Pancreas (tissue), 10 donors: ENCODE measurements at regions of chr22 and their contacts with region 1.

Region 1: GRCh38 chr22:42437488-42438292 is 5.5 kb upstream of the NFAM1 start:
- DNase-seq: peak; percentile 62 to 90 (median 81)
- ATAC-seq: peak; percentile 89 to 92 (median 91)
- H3K4me3 ChIP-seq: peak overlapping the region in 3 of 4 donors; percentile 12 to 39 (median 26)
- H3K27ac ChIP-seq: peak overlapping the region; percentile 0 to 78 (median 57)
- H3K4me1 ChIP-seq: no peaks in the 10 kb centered on the region
- H3K27me3 ChIP-seq: no peaks in the 10 kb centered on the region
- CTCF ChIP-seq: peak; percentile 88 to 95 (median 90)

Region 2: DNA sequence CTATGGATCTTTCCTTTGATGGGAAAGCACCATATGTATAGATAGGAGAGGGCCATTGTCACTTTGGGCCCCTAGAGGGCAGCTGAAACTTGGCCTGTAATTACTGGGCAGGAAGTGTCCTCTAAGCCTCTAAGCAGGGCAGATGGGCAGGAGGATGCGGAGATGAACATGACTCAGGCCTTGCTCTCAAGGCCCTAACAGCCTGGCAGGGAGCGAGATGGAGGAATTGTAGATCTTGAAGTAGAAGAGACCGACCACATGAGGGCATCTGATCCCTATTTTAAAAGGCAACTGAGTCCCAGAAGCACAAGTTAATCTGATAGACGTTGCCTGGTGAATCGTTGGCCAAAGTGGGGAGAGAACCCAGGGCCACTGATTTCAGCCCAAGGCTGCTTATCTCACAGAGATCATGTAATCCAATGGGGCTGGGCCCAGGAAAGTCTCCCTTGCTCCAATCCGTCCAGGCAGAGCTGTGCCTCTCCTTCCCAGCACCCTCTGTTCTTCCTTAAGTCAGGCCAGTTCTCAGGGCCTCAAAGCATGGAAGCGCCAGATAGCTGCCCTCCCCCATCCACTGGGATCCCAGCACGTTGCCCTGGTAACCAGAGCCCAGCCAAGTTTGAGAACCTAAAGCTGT is 471.0 kb before region 1 on chr22:
- intact Hi-C with region 1: loop called in 1 of 3 experiments (anchors 10 kb)
- DNase-seq: no peak
- ATAC-seq: peak in 3 of 4 donors; percentile 70 to 84 (median 75)
- H3K4me3 ChIP-seq: no peak overlapping the region
- H3K27ac ChIP-seq: no peak overlapping the region
- H3K4me1 ChIP-seq: no peaks in the 10 kb centered on the region
- H3K27me3 ChIP-seq: no peaks in the 10 kb centered on the region
- CTCF ChIP-seq: peak in 1 of 4 donors; percentile 15

Region 3: DNA sequence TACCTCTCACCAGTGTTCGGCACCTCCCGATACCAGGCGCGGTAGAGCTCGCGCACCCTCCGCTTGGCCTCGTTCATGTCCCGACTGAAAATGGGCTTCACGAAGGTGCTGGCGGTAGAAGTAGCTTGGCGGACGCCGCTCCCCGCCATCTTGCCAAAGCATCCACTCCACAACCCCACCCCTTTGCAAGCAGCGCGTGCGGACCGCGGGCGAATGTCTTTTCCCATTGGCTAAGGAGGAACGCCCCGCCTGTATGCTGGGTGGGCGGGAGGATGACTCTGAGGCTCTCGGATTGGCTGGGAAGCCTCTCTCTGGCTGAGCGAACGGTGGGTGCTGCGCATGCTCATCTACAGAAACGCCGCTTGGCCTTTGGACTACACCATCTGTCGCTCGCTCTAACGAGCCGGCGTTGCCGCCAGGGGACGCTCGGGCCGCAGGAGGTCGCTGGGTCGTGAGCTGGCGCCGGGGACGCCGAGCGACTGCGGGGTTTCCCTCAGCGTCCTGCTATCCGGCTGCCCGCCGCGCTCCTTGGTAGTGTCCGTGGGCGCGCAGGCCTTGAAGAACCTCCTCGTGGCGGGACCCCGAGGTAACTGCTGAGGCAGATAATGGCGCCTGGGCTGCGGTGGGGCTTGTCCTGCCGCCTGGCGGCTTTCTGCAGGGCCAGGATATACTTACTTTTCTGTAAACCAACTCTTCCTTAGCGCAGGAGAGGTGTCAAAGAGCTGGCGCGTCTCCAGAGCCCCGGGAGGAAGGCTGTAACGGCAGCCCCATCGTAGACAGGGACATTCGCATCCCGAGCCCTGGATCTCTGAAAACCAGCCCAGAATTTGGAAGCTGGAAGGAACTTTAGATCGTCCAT is 346.9 kb before region 1 on chr22 and contains the start of gene NDUFA6:
- intact Hi-C with region 1: loop called in 1 of 3 experiments (anchors 10 kb)
- DNase-seq: peak; percentile 97 to 99 (median 99)
- ATAC-seq: peak; percentile 92 to 97 (median 94)
- H3K4me3 ChIP-seq: peak within 1 kb of the TSS; percentile 62 to 89 (median 74)
- H3K27ac ChIP-seq: peak within 1 kb of the TSS; percentile 92 to 98 (median 94)
- H3K4me1 ChIP-seq: peaks cover 0 to 15% (median 5%) of the 10 kb centered on the region in 3 donors
- H3K27me3 ChIP-seq: no peaks in the 10 kb centered on the region
- CTCF ChIP-seq: peak; percentile 68 to 90 (median 82)
- total RNA-seq, gene NDUFA6: 16.8 to 32.4 (median 23.0) TPM

Region 4: GRCh38 chr22:42169055-42169469 is 268.6 kb before region 1 on chr22:
- intact Hi-C with region 1: loop called in 2 of 3 experiments (anchors 5 kb)
- DNase-seq: peak in 5 of 6 donors; percentile 43 to 72 (median 60)
- ATAC-seq: peak; percentile 73 to 91 (median 86)
- H3K4me3 ChIP-seq: no peak overlapping the region
- H3K27ac ChIP-seq: no peak overlapping the region
- H3K4me1 ChIP-seq: no peaks in the 10 kb centered on the region
- H3K27me3 ChIP-seq: no peaks in the 10 kb centered on the region
- CTCF ChIP-seq: peak; percentile 54 to 85 (median 79)

Region 5: DNA sequence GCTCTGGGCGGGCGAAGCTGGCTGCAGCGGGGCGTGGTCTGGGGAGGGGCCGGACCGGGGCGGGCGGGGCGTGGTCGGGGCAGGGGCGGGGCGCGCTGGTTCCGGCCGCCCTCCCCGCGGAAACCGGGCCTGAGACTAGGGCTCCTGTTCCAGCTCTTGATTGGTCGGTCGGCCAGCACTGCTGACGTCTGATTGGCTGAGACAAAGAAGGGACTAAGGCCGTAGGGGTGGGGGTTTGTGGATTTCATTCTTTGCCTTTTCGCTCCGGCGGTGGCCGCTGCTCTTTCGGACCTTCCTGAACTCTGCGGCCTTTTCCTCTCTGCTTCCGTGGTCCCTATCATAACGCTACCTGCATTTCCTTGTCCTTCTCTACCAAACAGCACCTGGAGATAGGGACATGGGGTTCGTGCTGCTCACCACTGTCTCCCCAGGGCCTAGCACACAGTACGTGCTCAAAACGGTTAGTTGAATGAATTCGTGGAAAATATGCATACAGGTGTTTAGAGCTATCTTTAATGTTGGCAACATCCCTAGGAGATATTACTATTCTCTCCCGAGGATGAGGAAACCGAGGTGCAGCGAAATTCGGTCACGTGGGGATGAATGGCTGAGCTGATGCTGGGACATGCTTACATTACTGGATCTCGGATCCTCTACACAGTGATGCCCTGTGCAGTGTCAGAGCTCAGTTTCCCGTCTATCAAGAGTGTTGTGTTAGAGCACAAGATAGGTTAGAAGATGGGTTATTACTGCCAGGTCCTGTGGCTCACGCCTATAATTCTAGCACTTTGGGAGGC is 68.2 kb before region 1 on chr22:
- intact Hi-C with region 1: loop called in 1 of 3 experiments (anchors 10 kb)
- DNase-seq: peak; percentile 92 to 96 (median 94)
- ATAC-seq: peak; percentile 95 to 98 (median 97)
- H3K4me3 ChIP-seq: peak overlapping the region; percentile 48 to 81 (median 64)
- H3K27ac ChIP-seq: peak overlapping the region in 2 of 4 donors; percentile 70
- H3K4me1 ChIP-seq: peaks cover 0 to 12% (median 0%) of the 10 kb centered on the region in 3 donors
- H3K27me3 ChIP-seq: no peaks in the 10 kb centered on the region
- CTCF ChIP-seq: no peak

Region 6: GRCh38 chr22:42396621-42397331 is 40.9 kb before region 1 on chr22:
- intact Hi-C with region 1: no loop called
- DNase-seq: peak in 1 of 6 donors; percentile 50
- ATAC-seq: peak in 2 of 4 donors; percentile 58 to 66
- H3K4me3 ChIP-seq: no peak overlapping the region
- H3K27ac ChIP-seq: peak overlapping the region in 2 of 4 donors; percentile 50 to 65
- H3K4me1 ChIP-seq: no peaks in the 10 kb centered on the region
- H3K27me3 ChIP-seq: no peaks in the 10 kb centered on the region
- CTCF ChIP-seq: no peak